A549 (cell line): ENCODE measurements at regions of chr20 and their contacts with region 1.

Region 1: GRCh38 chr20:49310705-49311104 is 32.8 kb upstream of the ZNFX1 start:
- DNase-seq: no peak
- ATAC-seq: no peak
- H3K4me3 ChIP-seq: no peak overlapping the region
- H3K27ac ChIP-seq: no peak overlapping the region
- H3K4me1 ChIP-seq: no peaks in the 10 kb centered on the region
- CTCF ChIP-seq: no peak
- EP300 ChIP-seq: no peak
- POLR2A ChIP-seq: no peak
- RAD21 ChIP-seq: no peak

Region 2: DNA sequence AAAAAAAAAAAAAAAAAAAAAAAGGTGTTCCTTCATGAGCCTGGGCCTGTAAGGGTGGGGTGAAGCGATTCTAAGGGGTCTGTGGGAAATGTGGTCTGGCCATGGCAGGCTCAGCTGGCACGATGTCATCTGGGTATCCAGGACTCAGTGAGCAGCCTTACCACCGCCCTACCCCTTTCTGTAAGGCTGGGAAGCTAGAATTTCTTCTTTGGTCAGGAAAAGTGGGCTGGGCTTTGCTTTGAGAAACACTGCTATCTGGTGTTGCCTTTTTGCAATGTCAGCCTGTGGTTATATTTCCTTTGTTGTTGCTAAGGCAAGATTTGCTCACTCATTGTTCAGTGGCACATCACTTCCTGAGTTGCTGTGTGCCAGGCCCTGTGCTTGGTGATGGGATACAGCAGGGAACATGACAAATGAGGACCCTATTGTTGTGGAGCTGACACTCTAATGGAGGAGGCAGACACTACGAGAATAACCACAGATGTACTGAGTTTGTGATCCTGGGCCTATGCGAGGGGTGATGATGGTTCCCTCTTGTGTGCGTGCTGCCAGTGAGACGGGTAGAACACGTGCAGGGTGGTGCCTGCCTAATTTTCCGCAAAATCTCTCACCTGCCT is 13.0 kb after region 1 on chr20:
- CTCF ChIA-PET with region 1: interaction called, 24 read pairs
- POLR2A ChIA-PET with region 1: no interaction called
- DNase-seq: peak in 1 of 2 experiments; percentile 47
- ATAC-seq: peak; percentile 58 to 68
- H3K4me3 ChIP-seq: no peak overlapping the region
- H3K27ac ChIP-seq: no peak overlapping the region
- H3K4me1 ChIP-seq: peaks cover 4% of the 10 kb centered on the region; the same call in 1 of the 3 replicates
- CTCF ChIP-seq: no peak
- EP300 ChIP-seq: no peak
- POLR2A ChIP-seq: no peak
- RAD21 ChIP-seq: peak; percentile 33 to 44; a peak in 2 of 5 replicates